CD4-positive, alpha-beta memory T cell (primary cell): ENCODE measurements at regions of chr14 and their contacts with region 1.

Region 1: DNA sequence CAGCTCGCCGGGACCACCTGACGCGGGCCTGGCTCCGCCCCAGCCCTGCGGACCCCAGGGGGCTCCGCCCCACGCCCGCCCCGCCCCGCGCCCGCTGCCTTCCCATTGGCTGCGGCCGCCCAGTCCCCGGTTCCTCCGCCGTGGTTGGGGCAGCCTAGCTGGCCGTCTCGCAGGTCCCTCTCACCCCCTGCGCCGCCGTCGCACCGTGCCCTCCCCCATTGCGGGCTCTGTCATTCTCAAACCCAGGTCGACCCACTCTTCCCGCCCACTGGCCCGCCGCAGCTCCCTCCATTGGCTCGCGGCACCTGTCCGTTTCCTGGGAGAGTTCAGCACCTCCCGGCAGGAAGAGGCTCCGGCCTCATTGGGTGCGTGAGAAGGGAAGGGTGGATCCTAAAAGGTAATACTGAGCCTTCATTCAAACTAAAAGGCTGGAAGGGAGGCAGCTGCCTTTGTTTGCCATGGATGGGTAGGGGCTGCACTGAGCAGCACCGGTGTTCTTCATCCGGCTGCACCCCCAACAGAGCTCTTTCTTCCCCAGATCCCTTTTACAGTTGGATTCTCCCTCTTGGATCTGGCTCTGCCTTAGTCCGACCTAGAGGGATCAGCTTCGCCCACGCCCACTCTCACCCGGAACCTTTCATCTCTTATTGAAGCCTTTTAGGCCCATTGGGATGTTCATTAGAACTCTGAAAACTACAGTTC is 381 bp upstream of the MAP3K9 start:
- DNase-seq: peak; percentile 79 to 91 (median 82)
- H3K4me3 ChIP-seq: peak overlapping the region; percentile 48 to 75
- H3K4me3 Mint-ChIP-seq: peak overlapping the region in 2 of 8 donors; percentile 93 to 94
- H3K27ac ChIP-seq: peak overlapping the region; percentile 54
- H3K27ac Mint-ChIP-seq: peak overlapping the region in 4 of 7 donors; percentile 73 to 90 (median 83)
- H3K4me1 ChIP-seq: peaks cover 17% of the 10 kb centered on the region
- H3K4me1 Mint-ChIP-seq: peaks cover 8 to 22% (median 12%) of the 10 kb centered on the region in 4 donors
- H3K27me3 ChIP-seq: no peaks in the 10 kb centered on the region
- H3K27me3 Mint-ChIP-seq: no peaks in the 10 kb centered on the region

Region 2: DNA sequence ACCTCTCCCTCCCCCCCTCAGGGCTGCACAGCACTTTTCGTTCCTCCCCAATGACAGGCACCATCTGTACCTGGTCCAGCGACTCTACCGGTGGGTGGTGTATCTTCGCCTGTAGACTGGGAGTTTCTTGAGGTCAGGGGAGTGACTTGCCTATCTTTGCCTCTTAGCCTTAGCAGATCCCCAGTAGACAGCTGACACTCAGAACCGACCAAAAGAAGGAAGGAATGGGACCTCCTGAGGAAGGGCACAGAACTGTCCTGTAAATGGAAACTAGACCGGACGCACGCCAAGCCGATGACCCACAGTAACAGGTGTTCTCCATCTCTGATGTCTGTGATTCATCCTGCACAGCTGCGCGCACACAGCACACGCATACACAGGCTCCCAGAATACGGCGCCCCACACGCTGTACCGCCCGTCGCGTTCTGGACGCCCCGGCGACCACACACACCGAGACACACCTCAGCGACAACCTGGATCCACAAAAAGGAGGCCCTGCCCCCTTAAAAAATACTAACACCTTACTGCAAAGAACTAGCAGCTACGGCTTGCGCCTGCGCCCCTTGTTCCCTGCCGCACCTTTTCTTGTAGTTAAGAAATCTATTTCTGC is 168.7 kb before region 1 on chr14:
- CTCF ChIA-PET with region 1: interaction called, 3 read pairs
- POLR2A ChIA-PET with region 1: interaction called, 23 read pairs
- intact Hi-C with region 1: loop called (anchors 2 kb)
- DNase-seq: peak; percentile 52 to 78 (median 59)
- H3K4me3 ChIP-seq: peak overlapping the region; percentile 78 to 85
- H3K4me3 Mint-ChIP-seq: peak overlapping the region; percentile 95 to 100 (median 97)
- H3K27ac ChIP-seq: peak overlapping the region; percentile 56
- H3K27ac Mint-ChIP-seq: peak overlapping the region; percentile 88 to 98 (median 95)
- H3K4me1 ChIP-seq: peaks cover 48% of the 10 kb centered on the region
- H3K4me1 Mint-ChIP-seq: peaks cover 35 to 64% (median 47%) of the 10 kb centered on the region in 4 donors
- H3K27me3 ChIP-seq: no peaks in the 10 kb centered on the region
- H3K27me3 Mint-ChIP-seq: peaks cover 0 to 1% of the 10 kb centered on the region in 2 donors

Region 3: DNA sequence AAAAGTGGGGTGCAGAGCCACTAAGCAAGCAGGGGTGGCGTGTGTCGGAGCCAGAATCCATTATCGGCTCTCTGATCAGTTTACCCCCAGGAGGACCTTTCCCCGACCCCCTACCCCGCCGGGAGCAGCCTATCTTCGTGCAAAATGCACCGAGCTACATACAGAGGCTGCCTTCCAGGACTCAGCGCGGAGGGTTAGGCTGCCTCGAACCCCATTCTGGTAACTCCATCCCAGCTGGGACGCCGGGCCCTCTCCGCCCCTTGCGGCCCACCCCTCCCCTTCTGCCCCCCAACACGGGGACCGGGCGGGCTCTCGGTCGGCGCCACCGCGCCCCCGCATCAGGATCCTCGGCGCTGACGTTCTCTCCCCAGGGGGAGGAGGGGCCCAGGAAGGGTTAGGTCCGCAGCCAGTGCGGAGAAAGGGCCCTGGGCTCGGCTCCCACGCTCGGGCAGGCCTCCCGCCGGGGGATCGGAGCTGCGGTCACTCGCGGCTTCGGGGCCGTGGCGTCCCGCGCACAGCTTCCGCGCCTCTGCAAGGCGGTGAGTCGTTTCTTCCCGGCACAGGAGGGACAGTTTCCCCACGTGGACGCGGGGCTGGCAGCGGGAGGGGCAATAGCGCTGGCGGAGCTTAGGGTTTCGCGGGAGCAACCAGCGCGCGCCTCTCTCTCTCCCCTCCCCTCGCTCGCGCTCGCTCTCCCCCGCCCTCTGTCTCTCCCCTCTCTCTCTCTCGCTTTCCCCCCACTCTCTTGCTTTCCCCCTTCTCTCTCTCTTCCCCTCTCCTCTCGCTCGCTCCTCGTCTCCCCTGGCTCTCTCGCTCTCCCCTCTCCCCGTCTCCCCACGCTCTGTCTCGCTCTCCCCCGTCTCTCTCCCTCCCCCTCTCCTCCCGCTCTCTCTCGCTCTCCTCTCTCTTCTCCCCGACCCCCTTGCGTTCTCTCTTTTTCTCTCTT is 12.2 kb after region 1 on chr14:
- CTCF ChIA-PET with region 1: interaction called, 20 read pairs
- POLR2A ChIA-PET with region 1: interaction called, 15 read pairs
- intact Hi-C with region 1: loop called (anchors 1 kb)
- DNase-seq: peak; percentile 37 to 79 (median 49)
- H3K4me3 ChIP-seq: peak overlapping the region; percentile 52 to 73
- H3K4me3 Mint-ChIP-seq: peak overlapping the region; percentile 83 to 93 (median 86)
- H3K27ac ChIP-seq: peak overlapping the region; percentile 14
- H3K27ac Mint-ChIP-seq: peak overlapping the region in 5 of 7 donors; percentile 62 to 77 (median 68)
- H3K4me1 ChIP-seq: peaks cover 18% of the 10 kb centered on the region
- H3K4me1 Mint-ChIP-seq: peaks cover 10 to 23% (median 14%) of the 10 kb centered on the region in 4 donors
- H3K27me3 ChIP-seq: no peaks in the 10 kb centered on the region
- H3K27me3 Mint-ChIP-seq: no peaks in the 10 kb centered on the region

Region 4: DNA sequence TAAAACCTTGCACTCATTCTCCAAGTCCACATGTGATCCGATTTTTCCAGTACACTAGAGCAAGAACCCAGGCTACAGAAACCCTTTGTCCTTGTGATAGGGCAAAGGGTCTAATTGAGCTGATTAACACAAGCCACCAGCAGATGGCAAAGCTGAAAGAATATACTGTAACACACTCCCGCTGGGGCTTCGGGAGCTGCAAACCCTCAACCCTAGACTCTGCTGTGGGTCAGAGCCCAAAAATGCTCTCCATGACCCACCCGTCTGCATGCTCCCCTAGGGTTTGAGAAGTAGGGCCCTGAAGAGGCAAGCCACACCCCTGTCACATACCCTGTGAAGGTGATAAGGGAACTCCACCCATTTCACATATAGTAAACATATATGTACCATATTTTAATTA is 63.9 kb after region 1 on chr14:
- CTCF ChIA-PET with region 1: interaction called, 3 read pairs
- POLR2A ChIA-PET with region 1: interaction called, 11 read pairs
- intact Hi-C with region 1: no loop called
- DNase-seq: peak; percentile 31 to 43 (median 35)
- H3K4me3 ChIP-seq: no peak overlapping the region
- H3K4me3 Mint-ChIP-seq: peak overlapping the region in 5 of 8 donors; percentile 42 to 69 (median 61)
- H3K27ac ChIP-seq: no peak overlapping the region
- H3K27ac Mint-ChIP-seq: peak overlapping the region; percentile 68 to 90 (median 86)
- H3K4me1 ChIP-seq: peaks cover 23% of the 10 kb centered on the region
- H3K4me1 Mint-ChIP-seq: peaks cover 10 to 26% (median 21%) of the 10 kb centered on the region in 4 donors
- H3K27me3 ChIP-seq: no peaks in the 10 kb centered on the region
- H3K27me3 Mint-ChIP-seq: no peaks in the 10 kb centered on the region